Right lobe of liver (tissue), 6 donors: ENCODE measurements at regions of chr9 and their contacts with region 1.

Region 1: GRCh38 chr9:20941174-20941690 is 90.2 kb downstream of the HACD4 start:
- DNase-seq: peak in 2 of 3 donors; percentile 40 to 53
- ATAC-seq: peak; percentile 99 to 100 (median 100)
- H3K4me3 ChIP-seq: no peak overlapping the region
- H3K27ac ChIP-seq: no peak overlapping the region
- H3K4me1 ChIP-seq: no peaks in the 10 kb centered on the region
- H3K27me3 ChIP-seq: no peaks in the 10 kb centered on the region
- CTCF ChIP-seq: peak; percentile 81 to 90 (median 88)
- POLR2A ChIP-seq: no peak

Region 2: GRCh38 chr9:19925817-19926503 is 1015.3 kb before region 1 on chr9:
- intact Hi-C with region 1: loop called in 1 of 2 experiments (anchors 10 kb)
- DNase-seq: peak; percentile 59 to 68 (median 66)
- ATAC-seq: peak; percentile 98 to 99 (median 98)
- H3K4me3 ChIP-seq: peak overlapping the region in 1 of 3 donors; percentile 32
- H3K27ac ChIP-seq: no peak overlapping the region
- H3K4me1 ChIP-seq: peaks cover 0 to 3% (median 0%) of the 10 kb centered on the region in 4 donors
- H3K27me3 ChIP-seq: no peaks in the 10 kb centered on the region
- CTCF ChIP-seq: peak; percentile 95 to 97 (median 96)
- POLR2A ChIP-seq: no peak

Region 3: DNA sequence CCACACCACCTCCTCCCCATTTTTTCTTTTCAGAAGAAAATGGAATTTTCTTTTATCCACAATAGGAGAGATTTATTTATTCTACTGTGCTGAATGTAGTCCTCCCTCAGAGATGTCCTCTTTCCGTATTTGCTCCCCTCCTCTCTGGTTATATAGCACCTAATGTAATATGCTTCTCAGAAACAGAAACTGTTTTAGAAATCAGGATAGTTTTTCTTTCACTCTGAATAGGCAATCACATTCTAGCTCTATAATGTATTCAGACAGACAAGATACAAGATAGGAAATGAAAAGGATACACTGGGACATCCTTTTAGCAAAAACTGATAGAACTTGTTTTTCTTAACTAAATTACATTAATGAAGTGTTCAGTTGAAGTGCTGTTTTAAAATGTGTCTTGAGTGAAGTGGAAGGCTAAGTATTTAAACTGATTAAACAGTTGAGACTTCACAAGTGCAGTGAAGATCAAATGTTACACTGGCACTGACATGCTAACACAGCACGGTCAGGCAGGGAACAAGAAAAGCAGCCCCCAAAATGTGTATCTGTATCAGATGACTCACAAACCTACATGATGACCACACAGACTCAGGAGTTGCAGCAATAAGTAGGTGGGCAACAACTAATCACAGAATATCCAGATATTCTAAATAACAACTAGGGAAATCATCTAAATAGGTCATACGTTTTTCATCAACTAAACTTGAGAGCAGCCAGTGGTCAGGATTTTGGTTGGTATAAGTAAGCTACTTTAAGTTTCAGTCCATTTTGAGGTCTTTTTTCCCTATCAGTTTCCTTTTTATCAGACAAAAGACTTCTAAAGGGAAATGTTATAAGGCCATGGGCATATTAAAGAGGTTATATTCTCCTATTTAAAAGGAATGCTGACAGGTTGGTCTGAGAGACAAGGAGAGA is 579.3 kb before region 1 on chr9:
- intact Hi-C with region 1: loop called in 1 of 2 experiments (anchors 5 kb)
- DNase-seq: no peak
- ATAC-seq: no peak
- H3K4me3 ChIP-seq: no peak overlapping the region
- H3K27ac ChIP-seq: no peak overlapping the region
- H3K4me1 ChIP-seq: no peaks in the 10 kb centered on the region
- H3K27me3 ChIP-seq: no peaks in the 10 kb centered on the region
- CTCF ChIP-seq: no peak
- POLR2A ChIP-seq: no peak

Region 4: GRCh38 chr9:20622330-20623020 is 318.8 kb before region 1 on chr9 and contains the start of gene MLLT3:
- intact Hi-C with region 1: loop called in 1 of 2 experiments (anchors 10 kb)
- DNase-seq: peak; percentile 97
- ATAC-seq: peak; percentile 93 to 98 (median 94)
- H3K4me3 ChIP-seq: peak within 1 kb of the TSS; percentile 72 to 80 (median 79)
- H3K27ac ChIP-seq: peak within 1 kb of the TSS; percentile 11 to 71 (median 47)
- H3K4me1 ChIP-seq: peaks cover 0 to 10% (median 0%) of the 10 kb centered on the region in 4 donors
- H3K27me3 ChIP-seq: no peaks in the 10 kb centered on the region
- CTCF ChIP-seq: no peak
- POLR2A ChIP-seq: peak; percentile 36
- total RNA-seq, gene MLLT3: 0.43 to 2.5 (median 1.2) TPM